ENCODE measurements at regions of chr1 and their contacts with region 1.

Region 1: GRCh38 chr1:231541842-231542241 is 13.4 kb downstream of the TSNAX start:
- DNase-seq: no peak
- ATAC-seq: no peak
- H3K4me3 ChIP-seq: no peak overlapping the region
- H3K27ac ChIP-seq: no peak overlapping the region
- H3K4me1 ChIP-seq: no peaks in the 10 kb centered on the region
- H3K27me3 ChIP-seq: no peaks in the 10 kb centered on the region
- CTCF ChIP-seq: no peak
- EP300 ChIP-seq: no peak
- POLR2A ChIP-seq: no peak
- RAD21 ChIP-seq: no peak

Region 2: DNA sequence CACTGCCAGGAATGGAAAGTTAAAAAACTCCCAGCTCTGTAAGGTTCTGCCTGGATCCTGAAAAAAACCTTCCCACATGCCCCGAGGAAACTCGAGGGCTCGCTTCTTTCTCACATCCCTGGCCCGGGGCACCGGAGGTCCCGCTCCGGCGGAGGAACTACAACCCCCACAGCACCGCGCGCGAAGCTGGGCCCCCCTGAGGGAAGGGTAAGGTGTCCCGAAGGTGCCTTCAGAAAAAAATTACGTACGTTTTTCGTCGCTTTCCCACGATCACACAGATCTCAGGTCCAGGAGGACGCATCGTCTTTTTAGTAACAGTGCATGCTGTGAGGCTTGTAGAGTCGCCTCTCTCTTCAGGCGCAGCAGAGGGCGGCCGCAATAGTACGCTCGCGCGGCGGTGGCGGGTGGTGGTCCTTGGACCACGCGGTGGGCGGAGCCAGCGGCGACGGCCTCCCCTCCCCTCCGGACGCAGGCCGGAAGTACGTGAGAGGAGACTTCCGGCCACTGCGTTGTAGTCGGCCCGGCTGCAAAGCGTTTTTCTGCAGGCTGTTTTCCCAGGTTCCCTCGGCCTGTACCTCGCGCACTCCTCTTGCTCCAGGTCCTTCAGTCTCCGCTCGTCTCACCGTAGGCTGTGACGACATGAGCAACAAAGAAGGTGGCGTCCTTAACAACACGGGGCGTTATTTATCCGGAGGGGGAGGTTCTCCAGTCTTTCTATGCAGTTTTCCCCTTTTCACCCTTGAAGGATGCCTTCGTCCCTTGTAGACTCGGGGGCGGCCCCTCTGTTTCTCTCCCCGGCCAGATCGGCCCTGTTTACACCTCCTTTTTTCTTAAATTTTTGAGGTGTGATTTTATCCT is 13.4 kb before region 1 on chr1 and contains the start of gene TSNAX:
- CTCF ChIA-PET with region 1: no interaction called
- POLR2A ChIA-PET with region 1: interaction called, 14 read pairs
- in situ Hi-C with region 1: no loop called
- intact Hi-C with region 1: no loop called
- DNase-seq: peak; percentile 97 to 98 (median 98)
- ATAC-seq: peak; percentile 93
- H3K4me3 ChIP-seq: peak within 1 kb of the TSS; percentile 87
- H3K27ac ChIP-seq: peak within 1 kb of the TSS; percentile 96
- H3K4me1 ChIP-seq: peaks cover 20% of the 10 kb centered on the region in 2 experiments
- H3K27me3 ChIP-seq: no peaks in the 10 kb centered on the region
- CTCF ChIP-seq: no peak; a peak in 1 of 6 replicates
- EP300 ChIP-seq: no peak; the same call in none of the 2 replicates
- POLR2A ChIP-seq: peak; percentile 96
- RAD21 ChIP-seq: no peak
- polyA plus RNA-seq, gene TSNAX: 77.3 to 82.4 TPM